CD8-positive, alpha-beta T cell (primary cell): ENCODE measurements at regions of chr10 and their contacts with region 1.

Region 1: GRCh38 chr10:12605580-12606405 is 256.4 kb downstream of the CAMK1D start:
- DNase-seq: peak; percentile 18 to 76 (median 55)
- ATAC-seq: peak; percentile 85
- H3K4me3 ChIP-seq: peak overlapping the region; percentile 46 to 57
- H3K4me3 Mint-ChIP-seq: peak overlapping the region; percentile 93
- H3K27ac ChIP-seq: peak overlapping the region; percentile 70 to 71
- H3K27ac Mint-ChIP-seq: peak overlapping the region; percentile 97
- H3K4me1 ChIP-seq: peaks cover 14% of the 10 kb centered on the region
- H3K4me1 Mint-ChIP-seq: peaks cover 30% of the 10 kb centered on the region
- H3K27me3 ChIP-seq: no peaks in the 10 kb centered on the region
- H3K27me3 Mint-ChIP-seq: no peaks in the 10 kb centered on the region
- CTCF ChIP-seq: no peak

Region 2: GRCh38 chr10:12588120-12588860 is 17.5 kb before region 1 on chr10:
- CTCF ChIA-PET with region 1: no interaction called
- POLR2A ChIA-PET with region 1: interaction called, 4 read pairs
- intact Hi-C with region 1: loop called in 1 of 2 experiments (anchors 2 kb)
- DNase-seq: peak in 5 of 9 experiments; percentile 19 to 55 (median 30)
- ATAC-seq: peak; percentile 76
- H3K4me3 ChIP-seq: peak overlapping the region in 1 of 2 experiments; percentile 16
- H3K4me3 Mint-ChIP-seq: peak overlapping the region; percentile 78
- H3K27ac ChIP-seq: no peak overlapping the region
- H3K27ac Mint-ChIP-seq: peak overlapping the region; percentile 67
- H3K4me1 ChIP-seq: peaks cover 33% of the 10 kb centered on the region
- H3K4me1 Mint-ChIP-seq: peaks cover 64% of the 10 kb centered on the region
- H3K27me3 ChIP-seq: no peaks in the 10 kb centered on the region
- H3K27me3 Mint-ChIP-seq: no peaks in the 10 kb centered on the region
- CTCF ChIP-seq: no peak

Region 3: GRCh38 chr10:12594448-12594944 is 11.3 kb before region 1 on chr10:
- CTCF ChIA-PET with region 1: interaction called, 4 read pairs
- POLR2A ChIA-PET with region 1: interaction called, 4 read pairs
- intact Hi-C with region 1: loop called in 1 of 2 experiments (anchors 1 kb)
- DNase-seq: peak in 6 of 9 experiments; percentile 13 to 63 (median 42)
- ATAC-seq: peak; percentile 74
- H3K4me3 ChIP-seq: no peak overlapping the region
- H3K4me3 Mint-ChIP-seq: peak overlapping the region; percentile 58
- H3K27ac ChIP-seq: peak overlapping the region in 1 of 2 experiments; percentile 53
- H3K27ac Mint-ChIP-seq: peak overlapping the region; percentile 90
- H3K4me1 ChIP-seq: peaks cover 44% of the 10 kb centered on the region
- H3K4me1 Mint-ChIP-seq: peaks cover 76% of the 10 kb centered on the region
- H3K27me3 ChIP-seq: no peaks in the 10 kb centered on the region
- H3K27me3 Mint-ChIP-seq: no peaks in the 10 kb centered on the region
- CTCF ChIP-seq: no peak